ENCODE measurements at regions of chr7 and their contacts with region 1.

Region 1: DNA sequence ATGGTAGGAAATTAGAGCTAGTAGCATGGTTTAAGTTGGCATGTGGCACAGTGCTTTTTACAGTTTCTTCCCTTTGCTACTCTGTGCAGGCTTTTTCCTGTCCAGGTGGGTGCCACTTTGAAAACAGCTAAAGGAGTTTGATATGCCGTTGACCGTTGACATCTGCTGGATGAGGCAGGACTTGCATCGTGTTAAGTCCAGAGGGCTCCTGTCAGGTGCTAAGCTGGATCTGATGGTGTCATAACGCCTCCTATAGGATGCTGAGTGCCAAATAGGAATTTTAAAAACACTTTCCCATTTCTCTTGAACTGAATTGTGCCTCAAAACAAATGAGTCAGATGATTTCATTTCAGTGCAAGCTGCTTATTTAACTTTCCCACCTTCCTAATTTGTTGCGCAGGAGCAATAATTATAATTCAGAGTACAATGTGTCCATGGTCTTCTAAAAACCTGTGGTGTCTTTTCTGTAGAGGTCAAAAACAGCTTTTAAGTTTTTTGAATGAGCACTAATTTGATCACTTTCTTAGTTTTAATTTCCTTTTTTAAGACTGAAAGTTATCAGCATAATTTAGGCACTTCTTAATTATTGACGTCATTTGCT is 178.3 kb downstream of the CDCA7L start:
- DNase-seq: peak; percentile 24 to 67 (median 52)
- ATAC-seq: peak; percentile 65
- H3K4me3 ChIP-seq: no peak overlapping the region
- H3K27ac ChIP-seq: no peak overlapping the region
- H3K4me1 ChIP-seq: no peaks in the 10 kb centered on the region
- H3K27me3 ChIP-seq: no peaks in the 10 kb centered on the region
- CTCF ChIP-seq: peak in 6 of 7 experiments; percentile 22 to 77 (median 62)
- POLR2A ChIP-seq: no peak

Region 2: DNA sequence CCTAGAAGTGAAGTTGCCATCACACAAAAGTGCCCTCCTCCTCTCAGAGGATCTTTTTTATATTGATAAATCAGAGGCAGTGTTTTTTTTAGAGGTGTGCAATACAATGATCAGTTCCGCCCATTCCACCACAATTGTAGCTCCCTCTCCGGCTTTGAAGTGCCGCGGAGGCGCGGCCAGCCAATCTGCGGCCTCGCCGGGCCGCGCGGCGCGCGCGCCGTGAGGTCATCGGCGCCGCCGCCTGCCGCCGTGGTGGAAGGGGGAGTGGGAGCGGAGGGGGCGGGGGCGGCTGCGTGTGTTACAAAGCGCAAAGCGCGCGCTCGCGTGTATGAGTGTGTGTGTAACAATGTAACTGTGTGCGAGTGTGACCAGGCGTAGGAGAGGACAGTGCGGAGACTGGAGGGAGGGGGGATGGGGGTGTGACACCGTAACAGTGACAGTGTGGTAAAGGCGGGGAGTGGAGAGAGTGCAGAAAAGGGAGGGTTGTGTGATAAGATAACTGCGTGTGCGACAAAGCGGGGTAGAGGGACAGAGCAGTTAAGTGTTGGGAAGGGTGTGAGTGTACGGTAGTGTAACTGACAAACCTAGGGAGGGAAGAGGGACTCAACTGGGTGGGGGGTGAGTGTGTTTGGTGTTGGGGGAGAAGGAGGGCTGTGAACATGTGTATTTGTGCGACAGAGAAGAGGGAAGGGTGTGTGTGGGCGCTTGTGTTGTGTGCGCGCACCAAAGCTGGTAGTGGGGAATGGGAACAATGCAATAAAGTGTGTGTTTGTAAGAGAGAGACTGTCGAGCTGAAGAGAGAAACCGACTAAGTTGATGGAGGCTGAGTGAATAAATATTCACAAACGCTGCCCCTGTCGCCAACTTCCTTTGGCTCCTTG is 980.4 kb before region 1 on chr7 and contains the start of gene SP8:
- intact Hi-C with region 1: loop called (anchors 10 kb)
- DNase-seq: peak in 1 of 4 donors; percentile 28
- ATAC-seq: no peak
- H3K4me3 ChIP-seq: no peak within 1 kb of the TSS
- H3K27ac ChIP-seq: no peak within 1 kb of the TSS
- H3K4me1 ChIP-seq: peaks cover 37% of the 10 kb centered on the region
- H3K27me3 ChIP-seq: peaks cover 6 to 63% of the 10 kb centered on the region in 2 donors
- CTCF ChIP-seq: no peak
- POLR2A ChIP-seq: no peak
- total RNA-seq, gene SP8: not detected